ENCODE measurements at regions of chr4 and their contacts with region 1.

Region 1: GRCh38 chr4:102826890-102827673 is at the start of gene UBE2D3:
- DNase-seq: peak; percentile 88 to 92
- ATAC-seq: peak; percentile 53 to 68
- H3K4me3 ChIP-seq: peak within 1 kb of the TSS; percentile 68 to 100 (median 94)
- H3K27ac ChIP-seq: peak within 1 kb of the TSS; percentile 94 to 100 (median 100)
- H3K4me1 ChIP-seq: peaks cover 31 to 40% of the 10 kb centered on the region in 2 donors
- H3K27me3 ChIP-seq: no peaks in the 10 kb centered on the region
- CTCF ChIP-seq: peak in 1 of 5 experiments; percentile 12
- POLR2A ChIP-seq: peak; percentile 81 to 87
- total RNA-seq, gene UBE2D3: 350 to 562 (median 392) TPM

Region 2: GRCh38 chr4:102430461-102430910 is 396.6 kb before region 1 on chr4:
- in situ Hi-C with region 1: no loop called
- intact Hi-C with region 1: loop called (anchors 5 kb)
- DNase-seq: no peak
- ATAC-seq: no peak
- H3K4me3 ChIP-seq: peak overlapping the region; percentile 55 to 84 (median 64)
- H3K27ac ChIP-seq: peak overlapping the region; percentile 45 to 70 (median 66)
- H3K4me1 ChIP-seq: peaks cover 0 to 6% of the 10 kb centered on the region in 2 donors
- H3K27me3 ChIP-seq: no peaks in the 10 kb centered on the region
- CTCF ChIP-seq: no peak
- POLR2A ChIP-seq: no peak

Region 3: DNA sequence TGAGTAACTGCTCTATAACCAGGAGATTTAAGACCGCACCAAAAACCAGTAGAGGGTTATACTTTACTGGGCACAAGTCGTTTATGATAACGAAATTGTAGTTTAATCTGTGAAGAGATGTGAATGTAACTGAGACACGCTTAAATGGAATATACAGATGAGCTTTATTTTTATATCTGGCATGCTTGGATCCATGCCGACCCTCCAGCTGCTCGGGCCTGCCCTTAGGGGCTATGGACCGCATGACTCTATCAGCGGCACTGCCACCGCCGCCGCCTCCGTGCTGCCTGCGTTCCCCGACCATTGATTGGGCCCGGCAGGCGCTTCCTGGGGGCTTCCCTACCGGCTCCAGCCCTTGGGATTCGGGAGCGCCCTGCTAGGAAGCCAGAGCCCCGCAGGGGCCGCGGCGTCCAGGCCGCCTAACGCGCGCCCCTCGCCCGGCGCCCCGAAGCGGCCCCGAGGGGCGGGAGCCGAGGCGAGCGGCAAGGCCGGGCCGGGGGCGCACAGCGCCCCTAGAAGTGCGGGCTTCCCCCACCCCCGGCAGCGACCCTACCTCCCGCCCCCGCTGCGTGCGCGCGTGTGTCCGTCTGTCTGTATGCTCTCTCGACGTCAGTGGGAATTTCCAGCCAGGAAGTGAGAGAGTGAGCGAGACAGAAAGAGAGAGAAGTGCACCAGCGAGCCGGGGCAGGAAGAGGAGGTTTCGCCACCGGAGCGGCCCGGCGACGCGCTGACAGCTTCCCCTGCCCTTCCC is 326.2 kb before region 1 on chr4 and contains the start of gene NFKB1:
- in situ Hi-C with region 1: no loop called
- intact Hi-C with region 1: loop called (anchors 5 kb)
- DNase-seq: peak; percentile 37 to 66
- ATAC-seq: peak; percentile 56 to 66
- H3K4me3 ChIP-seq: peak within 1 kb of the TSS; percentile 71 to 98 (median 88)
- H3K27ac ChIP-seq: peak within 1 kb of the TSS; percentile 97 to 99 (median 98)
- H3K4me1 ChIP-seq: peaks cover 37 to 43% of the 10 kb centered on the region in 2 donors
- H3K27me3 ChIP-seq: no peaks in the 10 kb centered on the region
- CTCF ChIP-seq: no peak
- POLR2A ChIP-seq: peak in 1 of 2 donors; percentile 50
- total RNA-seq, gene NFKB1: 20.0 to 27.2 (median 22.7) TPM

Region 4: DNA sequence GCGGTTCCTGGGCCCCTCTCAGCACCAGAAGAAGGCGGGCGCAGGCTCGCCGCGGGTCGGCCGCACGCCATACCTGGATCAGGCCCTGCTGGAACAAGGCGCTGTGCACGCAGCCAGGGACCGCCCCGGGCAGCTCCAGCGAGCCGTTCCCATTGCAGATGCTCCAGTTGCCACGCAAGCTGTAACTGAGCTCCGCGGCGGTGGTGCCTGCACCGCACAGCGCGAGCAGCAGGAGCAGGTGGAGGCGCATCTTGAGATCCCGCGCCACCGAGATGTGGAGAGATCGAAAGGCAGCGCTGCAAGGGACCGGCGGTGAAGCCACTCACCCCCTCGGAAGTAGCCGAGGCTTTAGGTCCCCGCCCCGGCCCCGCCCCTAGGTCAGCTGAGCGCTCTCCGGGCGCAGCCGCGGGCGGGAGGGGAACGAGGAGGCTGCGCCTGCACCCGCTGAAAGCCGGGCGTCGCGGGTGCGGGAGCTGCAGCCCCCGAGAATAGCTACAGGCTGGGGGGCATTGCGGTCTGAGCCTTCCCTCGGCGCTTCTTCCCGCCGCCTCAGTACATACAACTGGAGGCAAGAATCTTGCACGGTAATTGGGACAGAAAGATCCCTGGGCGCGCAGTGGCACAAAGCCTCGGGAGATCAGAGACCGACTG is 66.3 kb before region 1 on chr4 and contains the start of gene MANBA:
- in situ Hi-C with region 1: no loop called
- intact Hi-C with region 1: loop called (anchors 1 kb)
- DNase-seq: peak; percentile 72 to 74
- ATAC-seq: peak; percentile 93 to 94
- H3K4me3 ChIP-seq: peak within 1 kb of the TSS; percentile 78 to 99 (median 83)
- H3K27ac ChIP-seq: peak within 1 kb of the TSS; percentile 83 to 89 (median 84)
- H3K4me1 ChIP-seq: peaks cover 5 to 19% of the 10 kb centered on the region in 2 donors
- H3K27me3 ChIP-seq: no peaks in the 10 kb centered on the region
- CTCF ChIP-seq: peak in 2 of 5 experiments; percentile 12 to 37
- POLR2A ChIP-seq: peak; percentile 65 to 71
- total RNA-seq, gene MANBA: 8.9 to 15.5 (median 12.6) TPM

Region 5: DNA sequence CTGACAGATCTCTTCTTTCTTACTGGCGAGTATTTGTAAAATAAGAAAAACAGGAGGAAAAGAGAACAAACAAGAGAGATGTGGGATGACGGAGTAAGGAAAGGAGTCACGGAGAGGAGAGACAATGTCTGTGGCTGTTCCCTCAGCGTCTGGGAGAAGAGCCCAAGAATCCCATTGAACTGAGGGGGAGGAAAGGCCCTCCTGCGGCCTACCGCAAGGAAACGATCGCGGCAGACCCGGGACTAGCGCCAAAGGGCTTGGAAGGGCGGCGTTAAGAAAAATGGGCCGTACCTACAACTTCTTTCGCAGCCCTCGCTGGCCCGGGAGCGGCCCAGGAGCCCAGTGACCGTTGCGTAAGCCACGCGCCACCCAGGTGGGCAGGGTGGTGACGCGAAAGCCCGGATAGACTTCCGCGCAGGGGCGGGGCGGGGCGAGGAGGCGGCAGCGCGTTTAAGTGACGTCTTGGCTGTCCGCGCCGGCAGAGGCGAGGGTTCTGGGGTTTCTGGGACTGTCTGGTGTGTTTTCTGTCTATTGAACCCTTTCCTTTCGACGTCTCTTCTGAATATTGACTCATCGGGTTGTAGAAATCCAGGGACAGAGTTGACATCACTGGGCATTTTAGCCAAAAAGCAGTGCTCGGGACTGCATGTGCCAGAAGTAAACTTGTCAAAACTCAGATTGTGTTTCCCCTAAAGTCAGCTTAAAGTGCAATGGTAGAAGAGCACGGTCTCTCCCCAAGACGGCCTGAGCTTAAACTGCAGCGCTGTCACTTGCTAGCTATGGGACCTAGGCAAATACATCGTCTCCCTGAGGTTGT is 192.4 kb after region 1 on chr4 and contains the start of gene SLC9B1:
- in situ Hi-C with region 1: no loop called
- intact Hi-C with region 1: loop called (anchors 1 kb)
- DNase-seq: peak; percentile 90 to 96
- ATAC-seq: peak; percentile 87 to 93
- H3K4me3 ChIP-seq: peak within 1 kb of the TSS; percentile 58 to 64 (median 62)
- H3K27ac ChIP-seq: peak within 1 kb of the TSS; percentile 90 to 96 (median 95)
- H3K4me1 ChIP-seq: peaks cover 15 to 21% of the 10 kb centered on the region in 2 donors
- H3K27me3 ChIP-seq: no peaks in the 10 kb centered on the region
- CTCF ChIP-seq: peak in 1 of 5 experiments; percentile 17
- POLR2A ChIP-seq: peak; percentile 84 to 86
- total RNA-seq, gene SLC9B1: not detected

Region 6: DNA sequence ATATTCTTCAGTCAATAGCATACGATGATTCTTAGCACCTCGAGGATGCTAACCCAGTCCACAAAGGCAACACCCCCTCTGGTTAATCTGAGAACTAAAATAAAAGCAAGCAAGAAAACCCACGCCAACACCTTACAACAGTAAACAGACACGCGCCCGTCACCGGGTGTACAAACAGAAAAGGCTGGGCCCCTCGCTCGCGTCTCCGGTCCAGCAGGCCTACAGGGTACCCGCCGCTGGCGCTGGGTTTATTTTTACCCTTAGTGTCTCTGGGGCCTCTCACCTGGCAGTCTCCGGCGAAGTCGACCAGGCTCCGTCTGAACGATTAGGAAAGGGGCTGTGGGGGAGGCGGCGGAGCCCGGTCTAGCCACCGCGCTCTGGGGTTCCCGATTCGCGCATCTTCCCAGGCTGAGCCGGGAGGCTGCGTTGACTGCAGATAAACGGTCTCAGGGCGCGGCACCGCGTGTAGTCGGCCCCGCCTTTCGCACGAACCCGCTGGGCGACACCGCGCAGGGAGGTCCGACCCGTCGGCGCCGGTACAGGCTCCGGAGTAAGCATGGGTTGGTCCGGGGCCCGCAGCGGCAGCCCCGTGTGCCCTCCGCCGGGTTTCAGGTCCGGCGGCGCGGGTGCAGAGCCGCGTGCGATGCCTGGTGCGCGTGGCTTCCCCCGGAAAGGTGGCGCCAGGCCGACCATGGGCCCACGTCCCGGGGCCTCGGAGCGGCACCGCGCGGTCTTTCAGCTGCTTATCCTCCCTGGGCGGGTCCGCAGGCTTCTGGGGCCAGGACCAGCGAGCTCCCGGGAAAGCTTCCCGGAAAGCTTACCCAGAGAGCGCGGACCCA is 249.0 kb after region 1 on chr4:
- in situ Hi-C with region 1: no loop called
- intact Hi-C with region 1: loop called (anchors 5 kb)
- DNase-seq: peak; percentile 27 to 50
- ATAC-seq: peak; percentile 77 to 82
- H3K4me3 ChIP-seq: peak overlapping the region; percentile 69 to 94 (median 78)
- H3K27ac ChIP-seq: peak overlapping the region; percentile 79 to 95 (median 82)
- H3K4me1 ChIP-seq: peaks cover 6 to 21% of the 10 kb centered on the region in 2 donors
- H3K27me3 ChIP-seq: no peaks in the 10 kb centered on the region
- CTCF ChIP-seq: no peak
- POLR2A ChIP-seq: peak; percentile 13 to 45